ENCODE measurements at regions of chr1 and their contacts with region 1.

Region 1: DNA sequence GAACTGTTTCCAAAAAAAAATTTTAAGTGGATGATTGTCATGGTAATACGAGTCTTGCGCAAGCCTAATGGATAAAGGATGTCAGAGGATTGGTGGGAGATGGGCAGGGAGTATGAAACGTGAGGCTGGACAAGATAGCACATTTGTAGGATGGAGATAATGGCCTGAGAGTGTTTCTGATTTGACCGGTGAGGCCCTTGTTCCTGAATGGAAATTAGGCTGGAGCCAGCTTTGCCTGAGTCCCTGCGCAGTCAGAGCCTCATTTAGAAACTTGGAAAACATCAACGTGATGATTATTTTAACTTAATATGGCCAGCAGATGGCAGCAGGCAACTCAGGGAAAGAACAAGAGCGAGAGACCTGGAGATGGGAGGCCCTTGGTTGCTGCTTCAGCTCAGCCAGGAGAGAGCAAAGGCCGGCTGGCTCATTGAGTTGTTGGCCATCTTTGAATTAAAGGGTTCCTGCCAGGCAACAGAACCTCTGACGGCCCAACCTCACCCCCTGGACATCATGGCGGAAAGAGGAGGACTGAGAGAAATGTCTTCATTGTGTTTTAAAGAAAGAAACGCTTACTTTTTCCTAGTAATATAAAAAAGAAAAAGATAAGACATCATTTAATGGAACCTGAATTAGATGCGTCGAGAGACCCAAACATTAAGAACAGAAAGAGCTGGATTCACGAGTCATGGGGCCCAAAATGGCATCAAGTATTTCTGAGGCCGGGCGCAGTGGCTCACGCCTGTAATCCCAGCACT is 80.3 kb downstream of the SELENOF start:
- DNase-seq: peak; percentile 24
- H3K4me3 Mint-ChIP-seq: no peak overlapping the region
- H3K27ac Mint-ChIP-seq: no peak overlapping the region
- H3K4me1 Mint-ChIP-seq: peaks cover 6% of the 10 kb centered on the region
- H3K27me3 Mint-ChIP-seq: peaks cover 5% of the 10 kb centered on the region

Region 2: GRCh38 chr1:86846166-86846647 is 12.6 kb after region 1 on chr1:
- intact Hi-C with region 1: no loop called
- DNase-seq: no peak
- H3K4me3 Mint-ChIP-seq: no peak overlapping the region
- H3K27ac Mint-ChIP-seq: no peak overlapping the region
- H3K4me1 Mint-ChIP-seq: no peaks in the 10 kb centered on the region
- H3K27me3 Mint-ChIP-seq: peaks cover 3% of the 10 kb centered on the region

Region 3: DNA sequence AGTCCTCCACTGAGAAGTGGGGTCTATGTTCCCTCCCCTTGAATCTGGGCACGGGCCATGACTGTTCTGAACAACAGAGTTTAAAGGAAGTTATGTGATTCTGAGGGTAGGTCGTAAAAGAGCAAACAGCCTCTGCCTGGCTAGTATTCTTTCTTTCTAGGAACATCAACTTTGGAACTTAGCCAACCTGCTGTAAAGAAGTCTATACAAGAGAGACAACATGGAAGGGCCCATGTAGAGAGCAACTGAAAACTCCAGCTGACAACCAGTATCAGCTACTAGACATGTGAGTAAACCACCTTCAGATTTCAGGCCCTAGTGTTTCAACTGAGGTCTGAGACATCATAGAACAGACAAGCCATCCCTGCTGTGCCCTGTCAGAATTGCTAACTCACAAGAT is 72.8 kb after region 1 on chr1:
- intact Hi-C with region 1: no loop called
- DNase-seq: no peak
- H3K4me3 Mint-ChIP-seq: no peak overlapping the region
- H3K27ac Mint-ChIP-seq: no peak overlapping the region
- H3K4me1 Mint-ChIP-seq: peaks cover 36% of the 10 kb centered on the region
- H3K27me3 Mint-ChIP-seq: no peaks in the 10 kb centered on the region

Region 4: DNA sequence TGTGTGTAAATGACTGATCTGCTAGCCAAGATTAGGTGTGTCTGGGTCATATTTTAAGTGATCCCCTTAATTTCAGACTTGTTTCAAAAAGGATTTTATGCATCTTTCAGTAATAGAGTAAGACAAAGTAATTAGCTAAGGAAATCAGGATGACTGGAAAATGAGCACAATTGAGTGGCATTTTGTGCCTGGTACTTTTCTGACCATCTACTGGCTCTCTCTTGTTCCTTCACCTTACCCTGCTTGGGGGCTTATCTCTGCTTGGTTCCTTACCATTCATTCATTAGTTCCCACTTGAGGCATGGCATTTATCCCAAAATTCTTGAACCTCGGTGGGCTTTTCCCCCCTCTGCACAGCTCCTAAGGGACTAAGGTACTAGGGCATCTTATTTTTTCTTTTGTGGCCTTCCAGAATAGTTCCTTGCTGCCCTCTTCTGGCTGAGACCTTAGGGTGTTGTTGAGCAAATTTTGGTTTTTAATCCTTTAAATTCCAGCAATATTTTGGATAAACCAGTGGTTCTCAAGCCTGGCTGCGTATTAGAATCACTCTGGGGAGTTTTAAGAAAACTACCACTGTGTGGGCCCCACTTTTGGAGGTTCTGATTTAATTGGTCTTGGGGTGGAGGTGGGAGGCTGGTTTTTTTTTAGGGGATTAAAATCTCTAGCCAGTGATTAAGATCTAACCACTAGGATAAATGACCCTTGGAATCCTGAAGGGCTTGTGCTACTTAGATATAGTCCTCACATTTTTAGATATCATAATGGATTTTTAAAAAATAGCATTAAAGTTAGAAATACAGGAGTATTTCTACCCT is 131.6 kb after region 1 on chr1:
- intact Hi-C with region 1: loop called (anchors 1 kb)
- DNase-seq: no peak
- H3K4me3 Mint-ChIP-seq: no peak overlapping the region
- H3K27ac Mint-ChIP-seq: no peak overlapping the region
- H3K4me1 Mint-ChIP-seq: no peaks in the 10 kb centered on the region
- H3K27me3 Mint-ChIP-seq: no peaks in the 10 kb centered on the region

Region 5: GRCh38 chr1:87024936-87025540 is 191.4 kb after region 1 on chr1:
- intact Hi-C with region 1: loop called (anchors 2 kb)
- DNase-seq: no peak
- H3K4me3 Mint-ChIP-seq: no peak overlapping the region
- H3K27ac Mint-ChIP-seq: no peak overlapping the region
- H3K4me1 Mint-ChIP-seq: no peaks in the 10 kb centered on the region
- H3K27me3 Mint-ChIP-seq: no peaks in the 10 kb centered on the region

Region 6: DNA sequence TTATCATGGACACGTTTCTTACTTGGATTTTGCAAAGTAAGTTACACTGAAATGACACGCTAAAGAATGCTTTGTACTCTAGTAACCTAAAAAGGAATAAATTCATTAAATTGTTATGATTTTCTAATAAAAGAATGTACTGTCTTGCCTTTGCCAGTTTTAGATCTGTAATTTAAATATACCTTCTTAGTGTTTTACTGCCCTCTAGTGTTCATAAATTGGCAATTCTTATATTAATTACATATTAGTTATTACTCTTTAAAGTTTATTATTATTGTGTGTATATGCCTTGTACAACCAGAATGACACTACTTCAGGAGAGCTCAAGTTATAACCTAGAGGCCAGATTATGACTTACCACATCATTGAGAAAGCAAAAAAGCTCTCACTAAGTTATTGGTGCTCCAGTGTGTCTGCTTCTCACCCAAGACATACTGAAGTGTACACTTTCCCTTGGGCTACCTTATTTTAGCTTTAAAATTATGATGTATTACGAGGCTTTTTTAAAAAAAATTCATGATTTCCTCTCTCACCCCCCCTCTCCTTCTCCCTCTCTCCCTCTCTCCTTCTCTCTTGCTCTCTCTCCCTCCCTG is 250.7 kb after region 1 on chr1:
- intact Hi-C with region 1: loop called (anchors 1 kb)
- DNase-seq: no peak
- H3K4me3 Mint-ChIP-seq: no peak overlapping the region
- H3K27ac Mint-ChIP-seq: no peak overlapping the region
- H3K4me1 Mint-ChIP-seq: peaks cover 5% of the 10 kb centered on the region
- H3K27me3 Mint-ChIP-seq: no peaks in the 10 kb centered on the region

Measured in activated T-helper 1 cell treated with anti-CD3 and anti-CD28 coated beads, Interleukin-12 subunit alpha, Interleukin-12 subunit beta, Interleukin-2, Interleukin-4 antibody, amounts not matched to agents 30 ng/mL and 10 ng/mL and 1 ng/mL, durations not matched to agents 14 hours and 24 hours and 36 hours (primary cell).